Dorsolateral prefrontal cortex (tissue), 120 donors: ENCODE measurements at regions of chr6 and their contacts with region 1.

Region 1: DNA sequence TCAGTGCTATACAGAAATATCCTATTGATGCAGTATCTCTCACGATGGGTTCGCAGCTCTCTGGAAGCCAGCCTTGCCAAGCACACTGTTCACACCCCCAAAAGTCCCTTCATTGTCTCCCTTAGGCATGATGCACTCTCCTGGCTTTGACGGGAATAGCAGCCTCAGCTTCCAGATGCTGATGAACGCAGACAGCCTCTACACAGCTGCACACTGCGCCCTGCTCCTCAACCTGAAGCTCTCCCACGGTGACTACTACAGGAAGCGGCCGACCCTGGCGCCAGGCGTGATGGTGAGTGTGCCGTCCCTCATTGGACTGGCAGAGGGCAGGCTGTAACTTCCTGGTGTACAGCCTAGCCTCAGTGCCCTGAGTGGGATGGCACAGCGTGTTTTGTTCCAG is 60.0 kb upstream of the PBOV1 start:
- DNase-seq: peak in 9 of 10 donors; percentile 45 to 78 (median 71)
- H3K4me3 ChIP-seq: no peak overlapping the region
- H3K27ac ChIP-seq: peak overlapping the region in 47 of 59 donors; percentile 2 to 77 (median 54)
- H3K27me3 ChIP-seq: no peaks in the 10 kb centered on the region
- CTCF ChIP-seq: peak in 54 of 56 donors; percentile 31 to 79 (median 62)

Region 2: GRCh38 chr6:138205437-138206094 is 72.8 kb before region 1 on chr6:
- intact Hi-C with region 1: loop called in 1 of 2 experiments (anchors 2 kb)
- DNase-seq: no peak
- H3K4me3 ChIP-seq: peak overlapping the region in 4 of 59 donors; percentile 3 to 17 (median 10)
- H3K27ac ChIP-seq: peak overlapping the region in 58 of 59 donors; percentile 13 to 90 (median 70)
- H3K27me3 ChIP-seq: no peaks in the 10 kb centered on the region
- CTCF ChIP-seq: no peak